Endothelial cell of umbilical vein (primary cell): ENCODE measurements at regions of chr3 and their contacts with region 1.

Region 1: DNA sequence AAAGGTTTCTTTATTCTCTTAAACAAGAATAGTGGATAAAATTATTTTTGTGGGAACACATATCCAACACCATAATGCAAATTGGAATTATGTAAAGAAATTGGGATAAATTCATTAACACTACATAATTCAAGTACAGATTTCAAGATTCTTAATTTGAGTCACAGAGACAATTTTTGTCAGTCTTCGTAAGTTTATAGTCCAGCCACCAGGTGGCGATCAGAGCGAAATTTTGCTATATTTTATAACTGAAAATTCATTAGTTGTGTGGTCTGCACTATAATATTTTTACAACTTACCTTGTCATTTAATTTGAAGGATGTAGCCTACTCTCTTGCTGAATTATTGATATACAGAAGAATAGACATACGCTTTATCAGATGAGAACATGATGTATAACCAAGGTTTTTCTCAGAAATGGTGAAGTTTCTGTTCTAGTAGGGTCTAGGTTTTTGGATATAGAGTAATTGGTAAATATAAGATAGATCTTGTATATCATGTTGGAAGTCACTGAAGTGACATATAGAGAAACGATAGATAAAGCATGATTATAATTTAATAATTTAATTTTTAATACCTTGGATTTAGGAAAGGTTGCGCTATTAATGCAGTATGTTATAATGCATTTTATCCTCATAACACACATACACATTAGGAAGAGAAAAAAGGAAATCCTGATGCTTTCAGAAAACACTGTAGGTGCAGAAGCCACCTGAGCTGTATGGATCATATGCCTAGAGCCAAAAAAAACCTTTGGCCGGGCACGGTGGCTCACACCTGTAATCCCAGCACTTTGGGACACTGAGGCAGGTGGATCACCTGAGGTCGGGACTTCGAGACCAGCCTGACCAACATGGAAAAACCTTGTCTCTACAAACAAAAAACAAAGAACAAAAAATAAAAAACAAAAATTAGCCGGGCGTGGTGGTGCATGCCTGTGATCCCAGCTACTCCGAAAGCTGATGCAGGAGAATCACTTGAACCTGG is 31.7 kb downstream of the PLSCR4 start:
- DNase-seq: peak; percentile 71
- H3K4me3 ChIP-seq: no peak overlapping the region
- H3K27ac ChIP-seq: peak overlapping the region; percentile 10
- H3K4me1 ChIP-seq: peaks cover 50% of the 10 kb centered on the region
- H3K27me3 ChIP-seq: no peaks in the 10 kb centered on the region
- CTCF ChIP-seq: peak; percentile 37 to 39
- POLR2A ChIP-seq: no peak

Region 2: DNA sequence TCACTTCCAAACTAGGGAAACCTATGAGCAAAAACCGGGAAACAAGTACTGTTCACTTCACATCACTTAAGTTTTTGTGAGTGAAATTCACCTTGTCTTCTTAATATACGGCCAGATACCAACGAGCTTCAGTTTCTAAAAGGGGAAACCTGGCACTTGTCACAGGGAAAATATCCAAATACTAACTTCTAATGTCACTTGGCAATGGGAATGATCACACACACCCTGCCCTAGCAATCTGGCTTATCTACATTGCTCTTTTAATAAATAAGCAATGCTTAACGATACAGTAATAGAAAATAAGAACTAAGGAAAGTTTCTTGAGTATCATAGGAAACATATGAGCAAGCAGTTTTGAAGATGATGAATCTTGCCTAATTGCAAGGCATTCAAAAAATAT is 23.6 kb before region 1 on chr3:
- CTCF ChIA-PET with region 1: interaction called, 30 read pairs
- POLR2A ChIA-PET with region 1: no interaction called
- dilution Hi-C with region 1: no loop called
- intact Hi-C with region 1: loop called (anchors 1 kb)
- DNase-seq: no peak
- H3K4me3 ChIP-seq: no peak overlapping the region
- H3K27ac ChIP-seq: peak overlapping the region; percentile 81
- H3K4me1 ChIP-seq: peaks cover 45% of the 10 kb centered on the region
- H3K27me3 ChIP-seq: no peaks in the 10 kb centered on the region
- CTCF ChIP-seq: no peak
- POLR2A ChIP-seq: no peak

Region 3: GRCh38 chr3:146250449-146251382 is 31.5 kb after region 1 on chr3 and contains the start of gene PLSCR4:
- CTCF ChIA-PET with region 1: interaction called, 5 read pairs
- POLR2A ChIA-PET with region 1: no interaction called
- dilution Hi-C with region 1: no loop called
- intact Hi-C with region 1: loop called (anchors 1 kb)
- DNase-seq: peak; percentile 93
- H3K4me3 ChIP-seq: peak within 1 kb of the TSS; percentile 94 to 97 (median 96)
- H3K27ac ChIP-seq: peak within 1 kb of the TSS; percentile 77
- H3K4me1 ChIP-seq: peaks cover 36% of the 10 kb centered on the region
- H3K27me3 ChIP-seq: no peaks in the 10 kb centered on the region
- CTCF ChIP-seq: no peak
- POLR2A ChIP-seq: peak; percentile 35
- total RNA-seq, gene PLSCR4: 81.5 and 91.8 TPM in 2 replicates

Region 4: GRCh38 chr3:146313411-146314111 is 94.4 kb after region 1 on chr3:
- CTCF ChIA-PET with region 1: interaction called, 7 read pairs
- POLR2A ChIA-PET with region 1: interaction called, 5 read pairs
- dilution Hi-C with region 1: no loop called
- intact Hi-C with region 1: loop called (anchors 1 kb)
- DNase-seq: peak; percentile 91
- H3K4me3 ChIP-seq: no peak overlapping the region
- H3K27ac ChIP-seq: peak overlapping the region; percentile 94
- H3K4me1 ChIP-seq: peaks cover 42% of the 10 kb centered on the region
- H3K27me3 ChIP-seq: no peaks in the 10 kb centered on the region
- CTCF ChIP-seq: no peak
- POLR2A ChIP-seq: peak; percentile 50